ENCODE measurements at regions of chr6 and their contacts with region 1.

Region 1: GRCh38 chr6:42901536-42901957 is 14.3 kb upstream of the PTCRA start:
- DNase-seq: peak; percentile 90
- H3K4me3 ChIP-seq: no peak overlapping the region
- H3K27ac ChIP-seq: no peak overlapping the region
- H3K4me1 ChIP-seq: peaks cover 10% of the 10 kb centered on the region
- CTCF ChIP-seq: peak; percentile 95

Region 2: DNA sequence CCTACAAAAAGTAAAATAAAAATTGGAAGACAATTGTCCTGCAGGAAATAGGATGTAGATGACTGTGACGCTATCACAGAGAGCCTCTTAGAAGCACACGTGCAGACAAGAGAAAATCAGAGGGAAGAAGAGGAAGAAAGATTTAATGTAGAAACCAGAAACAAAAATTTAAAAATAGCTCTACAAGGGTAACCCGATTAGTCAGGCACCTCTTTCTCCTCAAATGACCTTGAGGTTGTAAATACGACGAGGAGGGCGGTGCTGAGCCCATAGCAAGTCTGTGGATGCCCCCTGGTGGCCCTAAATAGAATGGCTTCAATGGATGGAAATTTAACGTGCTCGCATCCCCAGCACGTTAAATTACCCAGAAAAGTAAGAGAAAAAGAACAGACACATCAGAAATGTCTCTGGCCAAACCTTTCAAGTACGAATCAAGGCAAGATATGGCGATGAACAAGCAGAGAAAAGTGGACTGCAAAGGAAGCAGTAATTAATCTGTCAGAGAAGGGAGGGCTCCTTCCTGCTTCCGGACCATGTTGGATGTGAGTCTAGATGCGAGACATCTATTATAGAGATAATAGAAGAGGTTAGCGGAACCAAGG is 175.0 kb before region 1 on chr6:
- CTCF ChIA-PET with region 1: no interaction called
- POLR2A ChIA-PET with region 1: no interaction called
- intact Hi-C with region 1: loop called (anchors 5 kb)
- DNase-seq: peak; percentile 91
- H3K4me3 ChIP-seq: peak overlapping the region; percentile 31
- H3K27ac ChIP-seq: peak overlapping the region; percentile 50
- H3K4me1 ChIP-seq: peaks cover 16% of the 10 kb centered on the region
- CTCF ChIP-seq: peak; percentile 98

Region 3: GRCh38 chr6:42864602-42865001 is 36.9 kb before region 1 on chr6:
- CTCF ChIA-PET with region 1: no interaction called
- POLR2A ChIA-PET with region 1: no interaction called
- intact Hi-C with region 1: no loop called
- DNase-seq: no peak
- H3K4me3 ChIP-seq: no peak overlapping the region
- H3K27ac ChIP-seq: no peak overlapping the region
- H3K4me1 ChIP-seq: no peaks in the 10 kb centered on the region
- CTCF ChIP-seq: no peak

Region 4: DNA sequence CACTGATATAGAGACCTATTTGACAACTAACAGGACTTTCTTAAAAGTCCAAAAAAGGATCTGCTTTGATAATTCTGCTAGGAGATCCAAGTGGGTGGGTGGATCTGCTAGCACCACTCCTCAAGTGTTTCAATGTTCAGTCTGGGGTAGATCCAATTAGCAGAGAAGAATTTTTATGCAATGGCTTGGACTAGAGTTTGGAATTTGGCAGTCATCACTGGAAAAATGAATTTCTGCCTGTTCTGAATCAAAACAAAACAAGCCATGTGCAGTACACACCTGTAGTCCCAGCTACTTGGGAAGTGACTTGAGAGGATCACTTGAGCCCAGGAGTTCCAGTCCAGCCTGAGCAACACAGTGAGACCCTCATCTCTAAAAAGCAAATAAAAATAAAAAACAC is 46.4 kb after region 1 on chr6:
- CTCF ChIA-PET with region 1: interaction called, 3 read pairs
- POLR2A ChIA-PET with region 1: interaction called, 3 read pairs
- intact Hi-C with region 1: loop called (anchors 5 kb)
- DNase-seq: no peak
- H3K4me3 ChIP-seq: no peak overlapping the region
- H3K27ac ChIP-seq: no peak overlapping the region
- H3K4me1 ChIP-seq: no peaks in the 10 kb centered on the region
- CTCF ChIP-seq: no peak

Region 5: DNA sequence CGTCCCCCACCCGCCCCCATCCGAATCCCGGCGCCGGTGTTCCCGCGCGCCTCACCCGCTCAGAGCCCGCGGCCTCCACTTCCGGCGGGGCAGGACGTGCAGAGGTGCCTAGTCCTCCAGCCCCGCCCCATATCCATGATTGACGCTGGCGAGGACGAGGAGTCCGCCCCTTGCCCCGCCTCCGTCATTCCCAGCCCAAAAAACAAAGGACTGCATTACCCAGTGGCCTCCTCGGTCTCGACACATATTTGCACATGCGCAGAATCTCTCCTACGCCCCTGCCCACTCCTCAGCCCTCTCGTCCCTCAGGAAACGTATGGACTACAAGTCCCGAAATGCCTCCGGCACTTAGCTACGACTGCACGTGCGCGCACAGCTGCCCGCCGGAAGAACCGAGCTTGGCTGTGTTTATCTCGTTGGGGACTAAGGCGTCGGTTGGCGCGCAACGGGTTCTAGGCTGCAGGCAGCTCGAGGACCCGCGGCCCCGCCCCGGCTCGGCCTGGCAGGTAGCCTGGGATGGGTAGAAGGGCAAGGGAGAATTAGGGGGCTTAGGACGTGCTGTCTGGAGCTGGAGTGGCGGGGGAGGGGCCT is 112.4 kb after region 1 on chr6 and contains the starts of genes KLHDC3 and MEA1:
- CTCF ChIA-PET with region 1: interaction called, 3 read pairs
- POLR2A ChIA-PET with region 1: no interaction called
- intact Hi-C with region 1: loop called (anchors 1 kb)
- DNase-seq: peak; percentile 100
- H3K4me3 ChIP-seq: peak within 1 kb of the TSS; percentile 86
- H3K27ac ChIP-seq: peak within 1 kb of the TSS; percentile 43
- H3K4me1 ChIP-seq: peaks cover 31% of the 10 kb centered on the region
- CTCF ChIP-seq: no peak
- total RNA-seq, gene KLHDC3: 78.6 and 89.9 TPM in 2 replicates
- total RNA-seq, gene MEA1: 70.7 and 76.0 TPM in 2 replicates

Region 6: DNA sequence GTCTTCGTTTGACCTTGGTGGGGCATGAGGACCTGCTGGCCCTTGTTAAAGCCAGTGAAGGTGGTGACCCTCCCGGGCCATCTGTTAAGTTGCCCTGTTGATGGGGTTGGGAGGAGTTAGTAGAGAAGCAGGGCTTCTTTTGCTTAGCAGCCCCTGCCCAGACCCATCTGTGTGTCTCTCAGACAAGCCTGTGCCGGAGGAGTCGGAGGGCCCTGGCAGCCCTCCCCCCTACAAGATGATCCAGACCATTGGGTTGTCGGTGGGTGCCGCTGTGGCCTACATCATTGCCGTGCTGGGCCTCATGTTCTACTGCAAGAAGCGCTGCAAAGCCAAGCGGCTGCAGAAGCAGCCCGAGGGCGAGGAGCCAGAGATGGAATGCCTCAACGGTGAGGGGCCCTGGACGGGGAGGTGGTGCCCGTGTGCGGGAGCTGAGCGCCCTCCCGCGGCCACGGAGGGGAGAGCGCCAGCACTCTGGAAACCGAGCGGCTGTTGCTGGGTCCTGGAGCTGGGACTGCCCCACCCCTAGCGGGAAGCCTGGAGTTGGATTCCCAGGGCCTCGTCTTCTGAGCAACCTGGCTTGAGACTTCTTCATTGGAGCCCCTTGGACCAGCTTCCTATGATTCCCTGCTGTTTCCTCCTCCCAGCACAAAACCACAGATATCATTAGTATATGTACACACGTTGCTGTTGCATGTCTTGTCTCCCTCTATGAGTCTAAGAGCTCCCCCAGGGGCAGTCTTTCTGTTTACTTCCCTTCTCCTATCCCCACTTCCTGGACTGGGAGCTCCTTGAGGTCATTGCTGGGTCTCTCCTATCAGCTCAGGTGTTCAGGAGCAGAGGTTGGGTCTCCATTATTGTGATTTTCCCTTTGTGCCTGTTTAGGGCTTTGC is 241.9 kb after region 1 on chr6:
- CTCF ChIA-PET with region 1: no interaction called
- POLR2A ChIA-PET with region 1: interaction called, 3 read pairs
- intact Hi-C with region 1: loop called (anchors 1 kb)
- DNase-seq: peak; percentile 81
- H3K4me3 ChIP-seq: no peak overlapping the region
- H3K27ac ChIP-seq: no peak overlapping the region
- H3K4me1 ChIP-seq: peaks cover 19% of the 10 kb centered on the region
- CTCF ChIP-seq: peak; percentile 96

Region 7: DNA sequence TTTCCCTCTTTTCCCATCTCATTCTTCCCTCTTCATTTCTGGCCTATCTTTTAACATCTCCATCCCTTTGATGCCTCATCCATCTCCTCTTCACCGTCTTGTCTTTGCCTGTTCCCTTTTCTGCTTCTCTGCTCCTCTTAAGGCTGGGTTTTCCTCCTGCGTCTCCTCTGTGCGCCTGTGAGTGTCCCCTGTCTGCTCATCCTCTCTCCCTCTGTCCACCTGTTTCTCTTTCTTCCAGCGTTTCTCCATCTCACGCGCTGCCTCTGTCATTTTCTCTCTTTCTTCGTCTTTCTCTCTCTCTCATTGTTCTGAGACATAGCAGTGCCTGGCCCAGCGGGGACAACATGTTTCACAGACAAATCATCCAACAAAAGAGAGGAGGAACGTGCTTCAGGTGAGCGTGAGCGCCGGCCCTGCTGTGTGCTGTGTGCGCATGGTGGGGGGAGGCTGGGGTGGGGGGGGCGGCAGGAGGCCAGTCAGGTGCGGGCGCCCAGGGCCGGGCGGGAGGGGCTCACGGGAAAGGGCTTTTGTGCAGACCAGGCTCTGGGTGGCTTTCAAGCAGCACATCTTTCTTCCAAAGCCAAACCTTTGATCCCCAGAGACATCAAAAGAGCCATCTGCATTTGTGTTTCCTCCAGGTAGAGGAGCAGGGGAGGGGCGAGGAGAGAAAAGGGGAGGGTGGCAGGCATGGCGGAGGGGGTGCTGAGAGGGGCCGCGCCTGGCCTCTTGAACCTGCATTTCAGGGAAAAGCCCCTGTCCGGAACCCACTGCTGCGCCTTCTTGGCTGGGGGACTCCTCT is 989.7 kb after region 1 on chr6:
- CTCF ChIA-PET with region 1: no interaction called
- POLR2A ChIA-PET with region 1: no interaction called
- intact Hi-C with region 1: no loop called
- DNase-seq: no peak
- H3K4me3 ChIP-seq: no peak overlapping the region
- H3K27ac ChIP-seq: no peak overlapping the region
- H3K4me1 ChIP-seq: no peaks in the 10 kb centered on the region
- CTCF ChIP-seq: no peak